ENCODE measurements at regions of chr11 and their contacts with region 1.

Region 1: GRCh38 chr11:43944761-43945311 is 2.4 kb downstream of the C11orf96 start:
- DNase-seq: peak; percentile 53
- H3K4me3 Mint-ChIP-seq: peak overlapping the region; percentile 89
- H3K27ac Mint-ChIP-seq: no peak overlapping the region
- H3K4me1 Mint-ChIP-seq: peaks cover 13% of the 10 kb centered on the region
- H3K27me3 Mint-ChIP-seq: peaks cover 59% of the 10 kb centered on the region

Region 2: DNA sequence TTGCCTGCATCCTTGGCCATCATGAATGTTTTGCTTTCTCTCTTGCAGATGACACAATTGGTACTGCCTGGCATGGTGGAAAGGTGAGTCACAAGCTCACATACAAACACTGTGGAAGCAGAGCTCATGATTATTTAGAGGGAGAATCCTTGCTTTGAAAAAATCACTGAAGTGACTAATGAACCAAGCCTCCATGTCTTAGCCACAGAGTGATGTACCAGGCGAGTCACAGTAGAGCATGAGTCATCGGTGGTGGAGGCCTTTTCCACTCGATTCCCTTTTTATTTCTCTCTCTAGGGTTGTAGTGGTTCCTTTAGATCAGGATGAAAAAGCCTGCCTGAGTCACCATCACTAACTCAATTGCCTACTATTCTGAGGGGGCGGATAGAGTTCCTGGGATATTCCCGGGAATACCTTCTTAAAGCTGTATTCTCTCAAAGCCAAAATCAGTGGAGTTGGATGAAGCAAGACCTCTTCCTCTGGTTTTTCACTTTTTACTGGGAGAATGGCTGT is 113.9 kb before region 1 on chr11:
- intact Hi-C with region 1: loop called (anchors 5 kb)
- DNase-seq: no peak
- H3K4me3 Mint-ChIP-seq: no peak overlapping the region
- H3K27ac Mint-ChIP-seq: peak overlapping the region; percentile 91
- H3K4me1 Mint-ChIP-seq: peaks cover 16% of the 10 kb centered on the region
- H3K27me3 Mint-ChIP-seq: no peaks in the 10 kb centered on the region

Region 3: DNA sequence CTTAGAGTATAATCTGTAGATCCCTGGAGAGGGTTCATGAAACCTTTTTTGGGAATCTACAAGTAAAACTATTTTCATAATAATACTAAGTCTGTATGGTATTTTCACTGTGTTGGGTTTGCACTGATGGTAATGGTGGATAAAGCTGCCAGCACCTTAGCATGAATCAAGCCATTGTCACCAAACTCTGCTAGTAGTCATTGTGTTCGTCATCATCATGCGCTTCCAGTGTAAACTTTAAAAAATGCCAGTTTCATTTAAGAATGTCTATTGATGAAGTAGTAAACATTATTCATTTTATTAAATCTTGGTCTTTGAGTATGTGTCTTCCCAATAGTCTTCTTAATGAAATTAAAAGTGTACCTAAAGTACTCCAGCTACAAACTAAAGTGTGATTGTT is 49.2 kb before region 1 on chr11:
- intact Hi-C with region 1: loop called (anchors 1 kb)
- DNase-seq: no peak
- H3K4me3 Mint-ChIP-seq: no peak overlapping the region
- H3K27ac Mint-ChIP-seq: no peak overlapping the region
- H3K4me1 Mint-ChIP-seq: no peaks in the 10 kb centered on the region
- H3K27me3 Mint-ChIP-seq: no peaks in the 10 kb centered on the region

Region 4: GRCh38 chr11:44315947-44316658 is 371.3 kb after region 1 on chr11:
- intact Hi-C with region 1: loop called (anchors 5 kb)
- DNase-seq: no peak
- H3K4me3 Mint-ChIP-seq: no peak overlapping the region
- H3K27ac Mint-ChIP-seq: no peak overlapping the region
- H3K4me1 Mint-ChIP-seq: peaks cover 4% of the 10 kb centered on the region
- H3K27me3 Mint-ChIP-seq: peaks cover 94% of the 10 kb centered on the region